ENCODE measurements at regions of chr20 and their contacts with region 1.

Region 1: GRCh38 chr20:24992487-24993205 is at the start of gene APMAP:
- DNase-seq: peak; percentile 99
- H3K4me3 ChIP-seq: peak within 1 kb of the TSS; percentile 68 to 93 (median 82)
- H3K27ac ChIP-seq: peak within 1 kb of the TSS; percentile 88 to 95 (median 93)
- H3K4me1 ChIP-seq: peaks cover 44 to 66% (median 54%) of the 10 kb centered on the region in 4 donors
- H3K27me3 ChIP-seq: no peaks in the 10 kb centered on the region
- CTCF ChIP-seq: no peak
- EP300 ChIP-seq: no peak
- POLR2A ChIP-seq: peak; percentile 94
- total RNA-seq, gene APMAP: 21.6 to 35.6 (median 32.5) TPM

Region 2: DNA sequence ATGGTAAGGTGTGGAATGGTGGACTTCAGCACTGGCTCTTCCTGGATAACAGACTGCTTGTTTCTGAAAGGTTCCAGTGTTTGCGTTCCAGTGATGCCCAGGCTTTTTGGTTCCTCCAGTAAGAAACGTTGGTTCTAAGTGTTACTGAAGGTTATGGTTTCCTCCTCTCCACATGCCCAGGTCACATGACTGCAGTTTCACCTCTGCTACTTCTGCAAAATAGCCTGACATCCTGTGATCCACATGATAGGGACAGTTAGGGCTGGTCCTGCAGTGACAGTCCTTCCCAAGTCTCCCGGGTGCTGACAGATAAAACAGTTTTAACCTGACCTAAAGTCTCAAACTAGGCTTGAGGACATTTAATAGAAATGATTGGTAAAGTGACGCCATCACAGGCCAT is 175.7 kb before region 1 on chr20:
- intact Hi-C with region 1: no loop called
- DNase-seq: no peak
- H3K4me3 ChIP-seq: no peak overlapping the region
- H3K27ac ChIP-seq: no peak overlapping the region
- H3K4me1 ChIP-seq: no peaks in the 10 kb centered on the region
- H3K27me3 ChIP-seq: no peaks in the 10 kb centered on the region
- CTCF ChIP-seq: no peak
- EP300 ChIP-seq: no peak
- POLR2A ChIP-seq: no peak

Region 3: DNA sequence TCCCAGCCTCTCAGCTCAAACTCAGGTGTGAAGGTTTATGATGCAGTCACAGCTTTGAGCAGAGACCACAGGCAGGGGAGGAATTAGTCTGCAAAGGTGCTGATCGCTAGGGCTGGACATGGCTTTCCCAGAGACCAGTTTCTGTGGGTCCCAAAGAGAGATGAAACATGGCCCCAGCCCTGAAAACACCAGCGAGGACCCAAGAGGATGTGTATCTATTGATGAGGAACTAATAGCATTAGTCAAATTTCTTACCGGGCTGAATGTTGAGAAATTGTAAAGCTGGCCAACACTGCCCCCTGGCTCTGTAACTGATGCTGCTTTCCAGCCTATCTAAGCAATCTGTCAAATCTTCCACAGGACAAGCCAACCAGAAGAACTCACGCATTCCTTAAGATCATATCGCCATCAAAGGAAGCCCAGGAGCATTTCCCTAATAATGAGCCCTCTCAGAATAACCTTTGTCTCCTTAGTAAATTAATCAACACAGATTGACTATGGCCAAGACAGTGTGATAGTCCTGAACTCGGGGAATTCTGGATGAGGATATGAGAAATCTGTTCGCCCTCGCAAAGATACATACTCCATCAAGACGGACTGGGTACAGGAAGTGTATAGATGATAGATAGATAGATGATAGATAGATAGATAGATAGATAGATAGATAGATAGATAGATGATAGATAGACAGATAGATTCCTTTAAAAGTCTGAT is 73.1 kb after region 1 on chr20:
- intact Hi-C with region 1: loop called (anchors 2 kb)
- DNase-seq: no peak
- H3K4me3 ChIP-seq: no peak overlapping the region
- H3K27ac ChIP-seq: no peak overlapping the region
- H3K4me1 ChIP-seq: peaks cover 8 to 15% (median 10%) of the 10 kb centered on the region in 4 donors
- H3K27me3 ChIP-seq: peaks cover 0 to 10% (median 0%) of the 10 kb centered on the region in 4 donors
- CTCF ChIP-seq: peak; percentile 78 to 86 (median 81)
- EP300 ChIP-seq: no peak
- POLR2A ChIP-seq: no peak

Region 4: DNA sequence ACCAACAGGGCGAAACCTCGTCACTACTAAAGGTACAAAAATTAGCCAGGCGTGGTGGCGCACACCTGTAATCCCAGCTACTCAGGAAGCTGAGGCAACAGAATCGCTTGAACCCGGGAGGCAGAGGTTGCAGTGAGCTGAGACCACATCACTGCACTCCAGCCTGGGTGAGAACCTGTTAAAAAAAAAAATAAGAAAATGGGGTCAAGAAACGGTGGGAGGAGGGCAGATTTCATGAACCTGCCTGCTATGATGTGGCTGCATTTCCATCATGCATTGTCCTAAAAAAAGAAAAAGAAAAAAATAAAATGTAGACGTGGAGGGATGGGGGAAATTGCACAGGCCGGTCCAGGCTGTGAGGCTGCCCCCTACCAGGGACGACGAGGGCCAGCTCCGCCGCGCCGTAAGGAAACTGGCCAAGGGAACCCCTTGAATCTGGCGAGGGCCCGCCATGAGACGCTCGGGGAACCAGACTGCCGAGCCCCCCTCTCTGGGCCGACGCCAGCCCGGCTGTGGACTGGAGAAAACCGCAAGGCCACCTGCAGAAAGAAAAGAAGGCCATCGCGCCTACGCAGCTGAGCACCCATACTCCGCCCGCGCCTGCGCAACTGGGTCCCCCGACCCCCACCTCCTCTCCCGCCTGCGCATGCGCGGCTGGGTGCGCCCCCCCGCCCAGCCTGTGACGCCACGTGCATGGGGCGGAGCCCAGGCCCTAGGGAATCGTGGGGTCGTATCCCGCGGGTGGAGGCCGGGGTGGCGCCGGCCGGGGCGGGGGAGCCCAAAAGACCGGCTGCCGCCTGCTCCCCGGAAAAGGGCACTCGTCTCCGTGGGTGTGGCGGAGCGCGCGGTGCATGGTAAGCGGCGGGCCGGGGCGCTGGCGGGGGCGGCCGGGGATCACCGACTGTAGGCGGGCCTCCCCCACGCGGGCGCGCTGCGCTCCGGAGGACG is 202.6 kb after region 1 on chr20 and contains the start of gene ENTPD6:
- intact Hi-C with region 1: loop called (anchors 5 kb)
- DNase-seq: peak; percentile 97
- H3K4me3 ChIP-seq: peak within 1 kb of the TSS; percentile 79 to 95 (median 94)
- H3K27ac ChIP-seq: peak within 1 kb of the TSS; percentile 84 to 94 (median 89)
- H3K4me1 ChIP-seq: peaks cover 39 to 55% (median 50%) of the 10 kb centered on the region in 4 donors
- H3K27me3 ChIP-seq: no peaks in the 10 kb centered on the region
- CTCF ChIP-seq: peak in 2 of 3 experiments; percentile 29 to 42
- EP300 ChIP-seq: no peak
- POLR2A ChIP-seq: peak; percentile 64
- total RNA-seq, gene ENTPD6: 39.0 to 44.1 (median 43.5) TPM

Region 5: DNA sequence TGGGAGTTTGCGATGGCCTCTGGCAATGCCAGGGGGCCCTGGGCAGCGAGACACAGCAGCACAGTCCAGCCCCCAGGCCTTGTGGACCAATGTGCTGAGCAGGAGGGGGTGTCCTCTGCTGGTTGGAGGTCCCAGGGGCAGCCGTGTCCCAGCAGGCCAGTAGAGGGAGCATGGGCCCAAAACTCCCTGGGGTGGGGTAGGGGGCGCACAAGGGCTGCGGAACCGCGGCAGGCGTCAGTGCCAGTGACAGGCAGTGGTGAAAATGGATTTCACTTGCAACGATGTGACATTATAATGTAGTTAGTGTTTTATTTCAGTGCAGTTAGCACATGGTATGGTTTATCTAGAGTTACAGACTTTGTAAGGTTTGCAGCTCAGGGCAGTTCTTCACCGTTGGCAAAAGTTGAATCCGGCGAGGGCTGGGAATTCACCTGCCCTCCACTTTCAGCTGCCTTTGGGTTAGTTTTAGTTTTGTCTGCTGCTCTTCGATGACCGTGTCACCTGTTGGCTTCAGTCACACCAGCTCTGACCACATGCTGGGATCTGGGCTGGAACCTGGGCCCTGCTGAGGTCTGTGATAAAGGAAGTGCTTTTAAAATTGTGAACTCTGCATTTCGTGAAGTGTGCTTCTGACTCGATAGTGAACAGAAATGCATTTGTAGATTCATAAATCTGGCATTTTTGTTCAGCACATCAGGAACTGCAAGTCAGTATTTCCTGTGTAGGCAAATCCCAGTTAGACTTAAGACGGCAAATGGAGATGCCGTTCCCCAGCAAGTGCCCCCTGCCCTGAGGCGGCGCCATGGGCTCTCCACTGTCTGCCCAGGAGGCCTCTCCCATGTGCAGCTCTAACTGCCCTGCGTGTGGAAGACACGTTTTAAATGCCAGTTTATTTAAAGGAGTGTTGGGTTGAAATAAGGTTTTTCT is 302.1 kb after region 1 on chr20:
- intact Hi-C with region 1: loop called (anchors 10 kb)
- DNase-seq: no peak
- H3K4me3 ChIP-seq: no peak overlapping the region
- H3K27ac ChIP-seq: peak overlapping the region; percentile 72 to 77 (median 74)
- H3K4me1 ChIP-seq: peaks cover 42 to 68% (median 57%) of the 10 kb centered on the region in 4 donors
- H3K27me3 ChIP-seq: no peaks in the 10 kb centered on the region
- CTCF ChIP-seq: peak; percentile 61 to 69 (median 68)
- EP300 ChIP-seq: no peak
- POLR2A ChIP-seq: no peak